ENCODE measurements at regions of chr2 and their contacts with region 1.

Region 1: DNA sequence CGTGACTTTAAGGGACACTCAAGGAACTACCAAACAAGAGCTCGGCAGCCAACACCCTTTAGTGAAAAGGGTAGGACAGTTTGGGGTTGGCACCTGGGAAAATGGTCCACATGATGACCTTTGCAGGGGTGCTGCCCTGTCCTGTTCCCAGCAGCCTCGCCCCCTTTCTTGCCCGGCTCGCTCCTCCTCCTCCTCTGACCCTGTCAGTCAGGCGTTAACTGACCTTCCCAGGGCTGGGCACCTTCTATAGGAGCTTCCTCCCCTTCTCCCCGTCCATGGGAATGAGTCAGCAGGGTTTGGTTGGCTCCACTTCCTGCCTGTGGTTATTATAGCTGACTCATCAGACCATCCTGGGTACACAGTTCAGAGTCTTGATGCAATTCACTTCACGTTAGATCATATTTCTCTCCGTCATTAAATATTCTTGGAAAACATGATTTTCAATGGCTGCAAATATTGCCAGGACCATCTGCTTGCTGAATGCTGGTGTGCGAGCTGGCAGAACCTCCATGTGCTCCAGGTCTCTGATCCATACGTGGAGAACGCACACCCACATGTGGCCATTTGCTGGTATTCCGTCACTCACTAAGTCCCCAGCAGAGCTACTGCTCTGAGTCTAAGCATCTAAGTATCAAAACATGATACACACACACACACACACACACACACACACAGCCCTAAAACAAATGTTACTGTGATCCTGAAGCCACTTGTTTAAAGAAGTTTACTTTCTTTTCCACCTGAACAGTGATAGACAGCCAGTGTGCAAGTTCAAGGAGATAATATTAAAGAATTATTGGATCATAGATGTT is 185.0 kb downstream of the ANAPC1 start:
- DNase-seq: peak; percentile 93
- H3K4me3 ChIP-seq: peak overlapping the region; percentile 15
- H3K27ac ChIP-seq: peak overlapping the region; percentile 86
- H3K4me1 ChIP-seq: peaks cover 19% of the 10 kb centered on the region
- H3K27me3 ChIP-seq: no peaks in the 10 kb centered on the region
- CTCF ChIP-seq: peak; percentile 70

Region 2: GRCh38 chr2:110807522-110807921 is 891.4 kb before region 1 on chr2:
- CTCF ChIA-PET with region 1: no interaction called
- POLR2A ChIA-PET with region 1: no interaction called
- intact Hi-C with region 1: loop called (anchors 1 kb)
- DNase-seq: no peak
- H3K4me3 ChIP-seq: no peak overlapping the region
- H3K27ac ChIP-seq: no peak overlapping the region
- H3K4me1 ChIP-seq: no peaks in the 10 kb centered on the region
- H3K27me3 ChIP-seq: peaks cover 12% of the 10 kb centered on the region
- CTCF ChIP-seq: no peak

Region 3: DNA sequence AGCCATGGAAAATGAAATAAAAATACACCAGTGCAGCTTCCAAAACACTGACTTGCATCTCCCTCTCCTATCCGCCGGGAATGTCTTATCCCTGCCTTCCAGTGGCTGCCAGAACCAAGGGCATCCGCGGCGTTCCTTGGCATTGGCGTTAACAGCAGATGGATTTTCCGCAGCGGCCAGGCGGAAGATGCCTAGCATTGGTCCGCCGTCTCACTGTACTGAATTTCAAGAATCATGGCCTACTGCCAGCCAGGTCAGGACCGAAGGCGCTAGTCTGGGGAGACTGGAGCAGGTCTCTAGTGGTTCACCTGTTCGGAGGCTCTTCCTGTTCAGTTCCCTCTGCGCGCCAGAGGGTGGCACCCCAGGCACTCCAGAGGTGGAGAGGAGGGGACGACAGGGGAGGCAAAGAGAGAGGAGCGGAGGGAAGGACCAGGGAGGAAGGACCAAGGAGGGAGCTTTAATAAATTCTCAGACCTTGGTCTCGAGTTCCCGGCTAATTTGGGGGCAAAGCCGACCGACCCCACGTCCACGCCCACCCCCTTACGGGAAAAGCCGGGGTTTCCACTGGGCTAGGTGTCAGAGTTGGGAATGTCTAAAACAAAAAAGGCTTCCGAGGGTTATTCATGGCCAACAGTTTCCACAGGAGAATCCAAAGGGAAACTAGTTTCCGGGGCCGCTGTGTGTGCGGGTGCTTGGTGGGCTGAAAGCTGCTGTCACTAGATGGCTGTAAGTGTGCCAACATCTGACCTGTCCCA is 581.9 kb before region 1 on chr2:
- CTCF ChIA-PET with region 1: interaction called, 19 read pairs
- POLR2A ChIA-PET with region 1: no interaction called
- intact Hi-C with region 1: loop called (anchors 2 kb)
- DNase-seq: peak; percentile 92
- H3K4me3 ChIP-seq: peak overlapping the region; percentile 47
- H3K27ac ChIP-seq: no peak overlapping the region
- H3K4me1 ChIP-seq: peaks cover 6% of the 10 kb centered on the region
- H3K27me3 ChIP-seq: peaks cover 23% of the 10 kb centered on the region
- CTCF ChIP-seq: peak; percentile 94

Region 4: DNA sequence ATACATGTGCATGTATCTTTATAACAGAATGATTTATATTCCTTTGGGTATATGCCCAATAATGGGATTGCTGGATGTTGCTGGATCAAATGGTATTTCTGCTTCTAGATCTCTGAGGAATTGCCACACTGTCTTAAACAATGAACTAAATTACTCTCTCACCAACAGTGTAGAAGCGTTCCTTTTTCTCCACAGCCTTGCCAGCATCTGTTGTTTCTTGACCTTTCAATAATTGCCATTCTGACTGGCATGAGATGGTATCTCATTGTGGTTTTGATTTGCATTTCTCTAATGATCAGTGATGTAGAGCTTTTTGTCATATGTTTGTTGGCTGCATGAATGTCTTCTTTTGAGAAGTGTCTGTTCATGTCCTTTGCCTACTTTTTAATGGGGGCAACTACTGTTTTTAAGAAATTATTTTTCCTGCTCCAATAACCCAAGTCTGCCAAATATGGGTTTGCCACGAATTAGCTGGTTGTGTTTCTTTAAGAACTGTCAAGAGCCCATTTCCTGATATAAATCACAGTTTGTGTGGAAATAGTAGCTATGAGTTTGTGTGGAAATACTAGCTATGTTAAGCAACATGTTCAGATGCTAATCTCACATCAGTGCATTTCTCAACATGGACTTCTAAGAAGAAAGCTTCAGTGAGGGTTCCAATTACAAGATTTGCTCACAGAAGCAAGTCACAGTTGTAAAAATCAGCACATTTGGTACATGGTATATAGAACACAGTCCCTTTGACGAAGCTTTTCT is 74.4 kb before region 1 on chr2:
- CTCF ChIA-PET with region 1: interaction called, 9 read pairs
- POLR2A ChIA-PET with region 1: no interaction called
- intact Hi-C with region 1: loop called (anchors 10 kb)
- DNase-seq: peak; percentile 94
- H3K4me3 ChIP-seq: no peak overlapping the region
- H3K27ac ChIP-seq: peak overlapping the region; percentile 17
- H3K4me1 ChIP-seq: peaks cover 14% of the 10 kb centered on the region
- H3K27me3 ChIP-seq: peaks cover 2% of the 10 kb centered on the region
- CTCF ChIP-seq: no peak

Measured in A673 (cell line).